ENCODE measurements at regions of chr1 and their contacts with region 1.

Region 1: DNA sequence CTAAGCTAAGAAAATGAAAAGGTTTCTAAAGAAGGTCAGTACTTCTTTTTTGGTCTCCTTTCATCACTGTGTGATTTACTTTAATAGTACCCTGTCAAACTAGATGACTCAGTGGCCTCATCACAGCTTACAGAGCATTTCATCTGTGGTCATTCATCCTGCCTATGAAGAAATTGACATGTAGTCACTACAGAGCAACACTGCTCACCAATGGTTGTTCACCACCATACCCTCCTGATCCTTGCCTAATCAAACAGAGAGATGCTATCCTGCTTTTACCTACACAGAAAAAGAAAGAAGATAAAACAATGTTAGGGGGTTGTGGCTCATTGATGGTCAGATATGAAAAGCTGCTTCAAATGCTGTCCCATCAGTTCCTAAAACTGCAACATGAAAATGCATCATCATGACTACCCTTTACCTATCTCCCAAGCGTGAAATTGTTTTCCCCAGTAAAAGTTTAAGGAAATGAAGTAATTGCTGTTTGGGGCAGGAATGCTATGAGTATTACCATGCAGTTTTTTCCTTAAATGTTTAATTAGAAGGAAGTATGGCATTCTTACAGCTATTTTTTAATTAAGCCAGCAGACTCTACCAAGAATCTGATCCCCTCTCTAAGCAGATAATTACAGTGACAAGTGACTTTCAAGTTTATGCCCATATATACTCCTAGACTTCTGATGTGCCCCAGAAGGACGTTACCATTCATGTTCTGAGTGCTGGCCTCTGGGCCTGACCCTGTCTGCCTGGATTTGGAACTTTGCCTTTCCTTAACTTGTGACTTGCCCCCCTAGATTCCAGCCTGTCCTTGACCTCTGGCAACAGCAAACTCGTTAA is 46.1 kb upstream of the FBXO28 start:
- DNase-seq: peak; percentile 70
- ATAC-seq: peak; percentile 56
- H3K4me3 ChIP-seq: no peak overlapping the region
- H3K27ac ChIP-seq: no peak overlapping the region
- H3K4me1 ChIP-seq: peaks cover 4% of the 10 kb centered on the region
- H3K27me3 ChIP-seq: no peaks in the 10 kb centered on the region
- CTCF ChIP-seq: no peak
- POLR2A ChIP-seq: no peak
- RAD21 ChIP-seq: no peak

Region 2: DNA sequence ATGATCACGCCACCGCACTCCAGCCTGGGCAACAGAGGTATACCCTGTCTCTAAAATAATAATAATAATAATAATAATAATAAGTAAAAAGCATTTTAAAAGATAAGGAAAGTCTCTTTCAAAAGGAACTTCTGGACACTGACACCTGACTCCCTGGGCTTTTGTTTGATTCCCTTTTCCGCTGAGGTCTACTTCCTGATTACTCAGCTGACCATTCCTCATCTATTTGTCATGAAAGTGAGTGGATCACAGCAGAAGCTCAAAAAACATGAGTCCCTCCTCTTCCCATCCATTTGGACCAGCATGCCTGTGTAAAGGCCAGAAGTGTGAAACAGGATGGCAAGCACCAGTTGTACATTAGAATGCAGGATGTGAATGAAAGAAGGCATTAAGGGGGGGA is 15.1 kb before region 1 on chr1:
- CTCF ChIA-PET with region 1: interaction called, 13 read pairs
- POLR2A ChIA-PET with region 1: no interaction called
- dilution Hi-C with region 1: no loop called
- in situ Hi-C with region 1: no loop called
- intact Hi-C with region 1: no loop called
- DNase-seq: peak; percentile 89
- ATAC-seq: peak; percentile 74
- H3K4me3 ChIP-seq: no peak overlapping the region
- H3K27ac ChIP-seq: peak overlapping the region; percentile 37; the same call in 1 of the 2 replicates
- H3K4me1 ChIP-seq: peaks cover 5% of the 10 kb centered on the region; the same call in 1 of the 2 replicates
- H3K27me3 ChIP-seq: no peaks in the 10 kb centered on the region
- CTCF ChIP-seq: no peak
- POLR2A ChIP-seq: no peak
- RAD21 ChIP-seq: no peak